ENCODE measurements at regions of chr6 and their contacts with region 1.

Region 1: DNA sequence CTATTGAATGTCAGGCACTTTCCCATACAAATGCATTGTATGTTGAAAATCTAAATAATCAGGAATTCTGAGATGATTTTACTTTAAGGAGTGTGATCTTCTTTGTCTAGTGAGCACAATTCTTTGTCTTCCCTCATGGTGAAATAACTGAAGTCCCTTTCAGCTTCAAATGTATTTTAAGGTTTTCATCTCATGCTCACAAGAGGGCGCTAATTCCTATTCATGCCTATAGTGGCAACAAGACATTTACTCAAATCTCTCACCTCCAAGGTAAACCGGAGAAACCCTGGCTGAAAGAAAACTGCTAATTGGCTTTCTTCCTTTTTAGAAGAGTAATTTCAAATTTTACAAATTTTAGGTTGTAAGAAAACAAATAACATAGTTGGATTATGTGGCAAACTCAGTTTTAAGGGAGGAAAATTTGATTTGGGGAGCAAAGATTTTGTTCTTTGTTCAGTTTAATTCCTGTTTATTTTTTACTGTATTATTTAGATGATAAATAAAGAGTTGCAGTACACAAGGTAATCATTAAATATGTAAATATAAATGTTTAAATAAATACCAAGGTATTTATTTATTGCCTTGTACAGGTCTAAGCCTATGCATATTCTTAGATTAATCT is 69.1 kb downstream of the SLC35F1 start:
- DNase-seq: peak in 1 of 2 donors; percentile 17
- ATAC-seq: peak in 1 of 8 donors; percentile 28
- H3K4me3 ChIP-seq: no peak overlapping the region
- H3K27ac ChIP-seq: no peak overlapping the region
- H3K4me1 ChIP-seq: peaks cover 0 to 16% (median 0%) of the 10 kb centered on the region in 9 donors
- H3K27me3 ChIP-seq: peaks cover 0 to 6% (median 0%) of the 10 kb centered on the region in 7 donors
- CTCF ChIP-seq: peak; percentile 25 to 74 (median 62)

Region 2: GRCh38 chr6:118263921-118264486 is 287.9 kb after region 1 on chr6:
- intact Hi-C with region 1: loop called (anchors 2 to 5 kb)
- DNase-seq: no peak
- ATAC-seq: peak in 6 of 8 donors; percentile 61 to 83 (median 72)
- H3K4me3 ChIP-seq: no peak overlapping the region
- H3K27ac ChIP-seq: no peak overlapping the region
- H3K4me1 ChIP-seq: no peaks in the 10 kb centered on the region
- H3K27me3 ChIP-seq: no peaks in the 10 kb centered on the region
- CTCF ChIP-seq: peak in 8 of 9 donors; percentile 23 to 67 (median 57)

Region 3: GRCh38 chr6:118551063-118552053 is 575.2 kb after region 1 on chr6:
- intact Hi-C with region 1: no loop called
- DNase-seq: no peak
- ATAC-seq: peak in 7 of 8 donors; percentile 43 to 69 (median 67)
- H3K4me3 ChIP-seq: peak overlapping the region; percentile 29 to 60 (median 50)
- H3K27ac ChIP-seq: peak overlapping the region in 9 of 10 donors; percentile 37 to 89 (median 81)
- H3K4me1 ChIP-seq: peaks cover 0 to 12% (median 0%) of the 10 kb centered on the region in 9 donors
- H3K27me3 ChIP-seq: no peaks in the 10 kb centered on the region
- CTCF ChIP-seq: peak; percentile 30 to 74 (median 55)

Region 4: GRCh38 chr6:118580585-118581419 is 604.7 kb after region 1 on chr6:
- intact Hi-C with region 1: loop called in 3 of 10 experiments (anchors 5 to 10 kb)
- DNase-seq: peak in 1 of 2 donors; percentile 43
- ATAC-seq: peak; percentile 85 to 92 (median 91)
- H3K4me3 ChIP-seq: no peak overlapping the region
- H3K27ac ChIP-seq: peak overlapping the region in 1 of 10 donors; percentile 51
- H3K4me1 ChIP-seq: peaks cover 0 to 29% (median 7%) of the 10 kb centered on the region in 9 donors
- H3K27me3 ChIP-seq: no peaks in the 10 kb centered on the region
- CTCF ChIP-seq: peak; percentile 48 to 80 (median 71)